ENCODE measurements at regions of chr15 and their contacts with region 1.

Region 1: DNA sequence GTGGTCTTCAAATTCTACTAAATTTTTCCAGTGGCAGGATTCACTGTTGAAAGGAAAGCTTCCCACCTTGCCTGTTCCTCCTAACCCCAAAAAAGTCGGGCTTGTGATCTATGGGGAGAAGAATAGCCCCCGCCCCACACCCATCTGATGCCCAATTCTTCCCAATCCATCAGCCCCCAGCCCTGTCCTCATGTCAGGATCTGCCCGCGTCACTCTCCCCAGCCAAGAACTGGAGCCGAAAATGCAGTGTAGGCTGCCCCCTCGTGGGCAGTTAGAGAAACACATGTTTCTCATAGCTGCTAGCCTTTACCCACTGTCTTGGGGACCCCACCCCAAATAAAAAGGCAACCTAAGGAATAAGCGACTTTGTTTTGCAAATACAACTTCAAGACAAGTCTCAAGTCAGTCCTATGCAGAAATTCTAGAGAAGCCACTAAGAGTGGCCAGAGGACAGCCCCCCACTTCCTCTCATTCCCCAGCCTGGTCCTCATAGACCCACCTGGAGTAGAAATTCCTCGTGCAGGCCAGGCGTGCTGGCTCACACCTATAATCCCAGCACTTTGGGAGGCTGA is 13.0 kb upstream of the CSK start:
- DNase-seq: peak; percentile 87 to 92
- H3K4me3 ChIP-seq: no peak overlapping the region
- H3K4me1 ChIP-seq: peaks cover 13% of the 10 kb centered on the region
- H3K27me3 ChIP-seq: peaks cover 4% of the 10 kb centered on the region; the same call in 1 of the 2 replicates

Region 2: DNA sequence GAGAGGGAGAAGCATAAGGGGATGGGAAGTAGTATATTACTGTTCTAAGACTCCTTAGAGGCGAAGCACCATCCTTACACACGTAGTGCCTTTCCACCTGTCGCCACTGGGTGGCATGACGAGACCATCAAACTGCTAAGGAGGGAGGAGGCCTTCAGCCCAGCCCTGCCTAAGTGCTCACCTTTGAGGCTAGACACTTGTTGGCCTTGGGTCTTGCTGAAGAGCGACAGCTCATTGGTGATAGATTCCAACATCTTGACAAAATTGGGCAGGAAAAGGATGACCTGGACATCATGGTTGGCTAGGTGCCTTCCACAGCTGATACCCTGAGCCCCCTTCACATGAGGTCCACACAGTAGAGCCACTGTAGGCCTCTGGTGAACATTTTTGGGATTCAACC is 133.6 kb before region 1 on chr15:
- in situ Hi-C with region 1: loop called (anchors 5 kb)
- DNase-seq: peak; percentile 84 to 89
- H3K4me3 ChIP-seq: no peak overlapping the region
- H3K4me1 ChIP-seq: no peaks in the 10 kb centered on the region
- H3K27me3 ChIP-seq: no peaks in the 10 kb centered on the region

Region 3: DNA sequence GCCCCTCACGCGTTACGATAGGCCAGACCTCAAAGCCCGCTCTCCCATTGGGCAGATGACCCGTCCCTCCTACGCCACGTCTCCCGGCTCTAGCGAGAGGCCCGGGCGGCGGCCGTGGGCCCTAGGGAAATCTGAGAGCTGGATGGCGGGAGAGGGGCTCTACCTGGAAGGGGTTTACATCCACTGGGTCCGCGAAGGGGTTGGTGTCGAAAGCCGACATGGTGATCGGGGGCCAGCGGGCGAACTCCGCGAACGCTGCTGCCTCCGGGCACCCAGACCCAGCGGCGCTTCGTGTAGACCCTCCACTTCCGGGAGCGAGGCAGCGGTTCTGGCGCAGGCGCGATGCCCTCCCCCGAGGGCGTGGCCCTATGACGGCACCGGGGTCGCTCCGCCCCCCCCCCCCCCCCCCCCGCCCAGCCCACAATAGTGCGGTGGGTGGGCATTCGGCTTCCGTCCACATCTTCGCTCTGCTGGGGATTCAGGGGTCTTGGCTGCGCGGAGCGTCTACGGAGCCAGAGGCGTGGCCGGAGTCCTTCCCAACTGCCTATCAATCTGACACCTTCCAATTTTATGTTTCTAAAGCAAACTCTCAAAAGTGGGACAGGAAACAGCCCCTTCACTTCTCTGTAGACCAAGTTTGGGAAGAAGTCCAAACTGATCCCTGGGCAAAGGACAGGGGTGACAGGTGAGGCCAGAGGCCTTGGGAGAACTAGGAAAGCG is 104.3 kb after region 1 on chr15 and contains the start of gene SCAMP2:
- in situ Hi-C with region 1: no loop called
- DNase-seq: peak; percentile 100
- H3K4me3 ChIP-seq: peak within 1 kb of the TSS; percentile 100
- H3K4me1 ChIP-seq: peaks cover 34% of the 10 kb centered on the region
- H3K27me3 ChIP-seq: no peaks in the 10 kb centered on the region